ENCODE measurements at regions of chr10 and their contacts with region 1.

Region 1: DNA sequence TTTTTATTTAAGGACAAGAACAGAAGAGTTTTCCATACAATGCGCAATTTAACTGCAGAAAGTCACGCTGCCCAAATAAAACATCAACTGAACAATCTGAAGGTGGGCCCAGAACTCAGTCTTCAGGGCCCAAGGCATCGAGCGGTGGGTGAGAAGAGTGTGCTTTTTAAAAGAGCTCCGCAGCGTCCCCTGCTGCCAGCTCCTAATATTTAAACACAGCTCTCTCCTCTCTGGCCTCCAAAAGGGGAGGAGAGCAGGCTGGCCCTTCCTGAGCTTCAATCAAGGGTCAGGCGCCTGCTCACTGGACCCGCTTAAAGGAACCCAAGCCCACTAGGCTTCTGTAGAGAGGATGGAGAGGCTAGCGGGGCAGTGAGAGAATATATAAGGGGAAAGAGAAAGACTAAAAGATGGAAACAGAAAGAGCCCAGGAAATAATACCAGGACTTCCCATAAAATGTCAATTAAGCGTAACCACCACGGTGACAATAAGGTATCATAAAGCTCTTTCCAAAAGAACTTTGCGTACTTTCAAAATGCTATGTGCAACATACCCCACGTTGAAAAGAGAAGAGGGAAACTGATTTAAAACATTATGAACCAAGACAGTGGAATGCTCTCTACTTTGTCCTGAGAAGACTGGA is 2.8 kb downstream of the FAM53B start:
- DNase-seq: peak; percentile 92
- ATAC-seq: peak; percentile 63
- H3K4me3 Mint-ChIP-seq: peak overlapping the region; percentile 87
- H3K27ac Mint-ChIP-seq: peak overlapping the region; percentile 79
- H3K4me1 Mint-ChIP-seq: peaks cover 69% of the 10 kb centered on the region
- H3K27me3 Mint-ChIP-seq: peaks cover 1% of the 10 kb centered on the region
- CTCF ChIP-seq: peak; percentile 94

Region 2: GRCh38 chr10:124517461-124517860 is 223.9 kb before region 1 on chr10:
- CTCF ChIA-PET with region 1: no interaction called
- POLR2A ChIA-PET with region 1: no interaction called
- intact Hi-C with region 1: no loop called
- DNase-seq: no peak
- ATAC-seq: no peak
- H3K4me3 Mint-ChIP-seq: no peak overlapping the region
- H3K27ac Mint-ChIP-seq: no peak overlapping the region
- H3K4me1 Mint-ChIP-seq: no peaks in the 10 kb centered on the region
- H3K27me3 Mint-ChIP-seq: no peaks in the 10 kb centered on the region
- CTCF ChIP-seq: no peak

Region 3: DNA sequence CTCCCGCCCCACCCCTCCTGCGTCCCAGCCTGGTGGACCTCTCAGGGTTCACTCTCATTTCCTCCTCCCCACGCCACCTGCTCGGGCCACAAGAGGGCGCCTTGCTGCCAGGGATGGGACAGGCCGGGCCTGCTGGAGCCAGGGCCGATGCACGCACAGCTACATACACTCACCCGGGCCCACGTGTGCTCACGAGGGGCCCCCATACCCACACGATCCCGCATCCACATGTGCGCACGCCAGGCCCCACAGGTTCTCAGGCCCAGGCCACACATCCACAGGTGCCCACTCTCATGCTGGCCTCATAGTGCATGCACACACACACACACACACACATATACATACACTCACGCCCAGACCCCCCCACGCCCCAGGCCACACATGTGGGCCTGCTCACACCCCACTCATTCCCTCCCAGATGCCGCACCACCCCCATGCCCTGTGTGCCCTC is 211.2 kb before region 1 on chr10:
- CTCF ChIA-PET with region 1: interaction called, 58 read pairs
- POLR2A ChIA-PET with region 1: interaction called, 4 read pairs
- intact Hi-C with region 1: loop called (anchors 5 kb)
- DNase-seq: peak; percentile 92
- ATAC-seq: peak; percentile 96
- H3K4me3 Mint-ChIP-seq: no peak overlapping the region
- H3K27ac Mint-ChIP-seq: no peak overlapping the region
- H3K4me1 Mint-ChIP-seq: peaks cover 15% of the 10 kb centered on the region
- H3K27me3 Mint-ChIP-seq: no peaks in the 10 kb centered on the region
- CTCF ChIP-seq: peak; percentile 75

Region 4: DNA sequence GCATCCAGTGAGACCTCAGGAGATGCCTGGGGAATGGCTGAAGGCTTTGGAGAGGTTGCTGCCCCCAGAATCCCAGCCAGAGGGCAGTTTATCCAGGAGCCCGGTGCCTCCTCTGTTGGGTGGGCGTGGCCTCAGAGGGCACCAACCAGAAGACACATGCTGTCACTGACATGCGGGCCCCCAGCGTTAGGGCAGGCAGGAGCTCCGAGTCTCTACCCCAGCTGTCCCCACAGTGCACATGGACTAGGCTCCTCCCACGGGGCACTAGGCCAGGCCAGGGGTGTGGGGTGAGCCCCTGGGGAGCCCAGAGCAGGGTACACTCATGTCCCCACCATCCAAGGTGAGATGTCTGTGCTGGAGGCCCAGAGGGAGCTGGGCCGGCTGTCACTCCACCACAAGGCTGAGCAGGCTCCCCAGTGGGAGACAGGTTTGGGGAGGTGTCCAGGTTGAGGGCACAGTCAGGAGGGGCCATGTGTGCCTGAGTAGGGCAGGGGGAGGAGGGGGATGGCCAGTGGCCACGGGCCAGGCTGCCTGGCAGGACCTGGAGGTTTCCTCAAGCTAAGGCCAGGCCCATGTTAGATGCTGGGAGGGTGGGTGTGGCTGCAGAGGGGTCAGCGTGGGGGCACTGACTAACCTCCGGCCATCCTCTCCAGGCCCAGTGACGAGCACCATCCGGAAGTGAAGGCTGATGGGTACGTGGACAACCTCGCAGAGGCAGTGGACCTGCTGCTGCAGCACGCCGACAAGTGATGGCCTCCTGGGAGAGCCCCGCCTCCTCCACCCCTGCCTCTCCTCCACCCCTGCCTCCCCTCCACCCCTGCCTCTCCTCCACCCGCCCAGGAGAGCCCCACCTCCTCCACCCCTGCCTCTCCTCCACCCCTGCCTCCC is 128.5 kb before region 1 on chr10:
- CTCF ChIA-PET with region 1: interaction called, 9 read pairs
- POLR2A ChIA-PET with region 1: interaction called, 5 read pairs
- intact Hi-C with region 1: loop called (anchors 5 kb)
- DNase-seq: peak; percentile 57
- ATAC-seq: peak; percentile 35
- H3K4me3 Mint-ChIP-seq: no peak overlapping the region
- H3K27ac Mint-ChIP-seq: peak overlapping the region; percentile 52
- H3K4me1 Mint-ChIP-seq: peaks cover 55% of the 10 kb centered on the region
- H3K27me3 Mint-ChIP-seq: no peaks in the 10 kb centered on the region
- CTCF ChIP-seq: no peak

Region 5: DNA sequence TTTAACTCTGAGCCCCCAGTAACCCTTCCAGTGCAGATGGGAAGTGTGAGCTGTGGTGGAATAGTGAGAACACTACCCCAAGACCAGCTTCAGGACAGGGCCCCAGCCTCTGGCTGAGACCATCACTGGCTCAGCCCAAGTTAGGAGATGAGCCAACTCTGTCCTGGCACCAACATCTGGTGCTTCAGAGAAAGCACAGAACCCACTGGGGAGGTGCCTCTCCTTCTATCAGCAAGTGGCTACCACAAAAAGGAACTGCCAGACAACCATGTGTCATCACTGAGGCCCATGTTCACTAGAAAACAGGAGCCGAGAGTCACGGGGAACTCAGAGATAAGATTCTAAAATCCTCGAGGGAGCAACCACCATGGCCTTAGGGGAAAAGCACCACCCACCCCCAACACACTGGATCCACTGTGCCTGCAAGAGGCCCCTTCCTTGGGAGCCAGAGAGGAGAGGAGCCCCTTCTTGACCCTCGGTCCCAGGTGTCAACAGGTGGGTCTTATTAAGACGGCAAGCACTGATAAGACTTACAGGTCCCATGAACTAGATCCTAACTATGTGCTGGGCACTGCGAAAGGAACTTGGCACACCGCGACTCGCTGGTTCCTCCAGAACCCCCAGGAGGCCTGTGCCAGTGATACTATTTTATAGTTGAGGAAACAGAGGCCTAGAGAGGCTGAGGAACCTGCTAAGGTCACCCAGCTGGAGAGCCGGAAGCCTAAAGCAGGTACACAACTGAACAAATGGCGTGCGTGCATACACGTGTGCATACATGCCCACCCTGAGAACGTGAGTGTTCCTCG is 99.9 kb before region 1 on chr10:
- CTCF ChIA-PET with region 1: interaction called, 28 read pairs
- POLR2A ChIA-PET with region 1: interaction called, 3 read pairs
- intact Hi-C with region 1: loop called (anchors 5 kb)
- DNase-seq: peak; percentile 58
- ATAC-seq: peak; percentile 78
- H3K4me3 Mint-ChIP-seq: peak overlapping the region; percentile 24
- H3K27ac Mint-ChIP-seq: peak overlapping the region; percentile 85
- H3K4me1 Mint-ChIP-seq: peaks cover 65% of the 10 kb centered on the region
- H3K27me3 Mint-ChIP-seq: no peaks in the 10 kb centered on the region
- CTCF ChIP-seq: no peak

Region 6: GRCh38 chr10:124688889-124689670 is 52.3 kb before region 1 on chr10:
- CTCF ChIA-PET with region 1: interaction called, 54 read pairs
- POLR2A ChIA-PET with region 1: interaction called, 7 read pairs
- intact Hi-C with region 1: loop called (anchors 5 kb)
- DNase-seq: peak; percentile 87
- ATAC-seq: peak; percentile 91
- H3K4me3 Mint-ChIP-seq: no peak overlapping the region
- H3K27ac Mint-ChIP-seq: peak overlapping the region; percentile 83
- H3K4me1 Mint-ChIP-seq: peaks cover 79% of the 10 kb centered on the region
- H3K27me3 Mint-ChIP-seq: no peaks in the 10 kb centered on the region
- CTCF ChIP-seq: no peak

Region 7: GRCh38 chr10:124708922-124709520 is 32.4 kb before region 1 on chr10:
- CTCF ChIA-PET with region 1: interaction called, 31 read pairs
- POLR2A ChIA-PET with region 1: interaction called, 6 read pairs
- intact Hi-C with region 1: no loop called
- DNase-seq: no peak
- ATAC-seq: no peak
- H3K4me3 Mint-ChIP-seq: no peak overlapping the region
- H3K27ac Mint-ChIP-seq: peak overlapping the region; percentile 21
- H3K4me1 Mint-ChIP-seq: peaks cover 81% of the 10 kb centered on the region
- H3K27me3 Mint-ChIP-seq: no peaks in the 10 kb centered on the region
- CTCF ChIP-seq: no peak